ENCODE measurements at regions of chrX and their contacts with region 1.

Region 1: DNA sequence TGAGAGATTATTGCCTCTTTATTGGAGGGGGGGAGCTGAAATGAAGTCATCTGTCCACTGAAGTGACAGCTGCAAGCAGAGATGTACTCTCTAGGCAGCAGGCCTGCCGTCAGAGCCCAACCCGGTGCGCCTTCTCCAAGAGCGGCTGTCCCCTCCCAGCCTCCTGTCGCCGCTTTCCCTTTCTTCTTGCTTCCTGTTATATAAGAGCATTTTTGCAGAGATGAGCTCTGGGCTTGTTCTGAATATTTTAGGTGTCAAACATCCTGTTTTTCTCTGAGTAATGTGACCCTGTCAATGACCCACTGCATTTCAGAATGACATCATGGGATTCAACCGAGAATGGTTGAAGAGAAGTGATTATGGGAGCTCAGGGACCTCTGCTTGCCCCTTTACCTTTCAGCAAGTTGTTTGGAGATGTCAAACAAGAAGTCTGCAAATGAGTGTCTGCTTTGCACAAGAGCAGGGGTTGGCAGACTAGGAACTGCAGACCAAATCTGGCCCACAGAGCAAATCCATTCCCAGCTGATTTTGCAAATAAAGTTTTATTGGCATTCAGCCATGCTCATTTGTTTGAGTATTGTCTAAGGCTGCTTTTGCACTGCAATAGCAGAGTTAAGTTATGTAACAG is 79.9 kb downstream of the SLC9A6 start:
- DNase-seq: peak; percentile 55

Region 2: GRCh38 chrX:136162831-136163570 is 97.8 kb after region 1 on chrX:
- CTCF ChIA-PET with region 1: interaction called, 17 read pairs
- POLR2A ChIA-PET with region 1: interaction called, 7 read pairs
- DNase-seq: peak; percentile 70

Region 3: DNA sequence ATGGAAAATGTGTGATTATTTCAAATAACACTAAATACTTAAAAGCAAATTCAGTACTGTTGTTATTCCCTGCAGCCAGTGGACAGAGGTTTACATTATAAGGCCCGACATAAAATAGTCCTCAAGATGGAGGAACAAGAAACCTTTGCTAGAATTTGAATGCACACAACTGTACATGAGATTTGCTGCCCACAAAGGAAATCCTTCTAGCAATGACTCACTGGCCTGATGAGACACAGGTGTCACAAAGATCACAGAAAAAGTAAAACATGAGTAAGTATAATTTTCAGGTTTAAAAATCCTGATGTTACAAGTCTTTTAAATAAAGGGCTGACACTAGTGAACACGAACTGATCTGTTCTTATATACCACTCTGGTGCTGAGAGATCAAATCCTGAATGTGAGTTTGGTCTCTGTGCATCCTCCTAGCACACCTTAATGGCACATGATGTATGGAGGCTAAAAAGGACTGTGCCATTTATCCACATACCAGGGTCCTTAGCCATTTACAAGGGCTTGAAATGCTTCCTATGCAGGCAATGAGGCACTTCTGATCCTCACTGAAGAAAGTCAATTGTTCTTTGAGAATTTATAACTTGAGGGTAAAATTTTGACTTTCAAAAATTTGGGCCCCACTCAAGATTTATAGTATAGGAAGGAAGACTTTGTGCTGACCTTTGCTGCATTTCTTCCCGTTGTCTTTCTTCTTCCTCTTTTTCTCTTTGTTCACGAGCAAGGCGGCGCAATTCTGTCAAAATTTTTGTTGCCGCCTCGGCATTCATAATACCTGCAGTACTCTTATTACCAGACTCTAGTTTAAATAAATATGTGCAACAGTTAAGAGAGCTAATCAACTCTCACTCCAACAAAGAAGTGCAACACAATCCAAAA is 163.0 kb after region 1 on chrX:
- CTCF ChIA-PET with region 1: no interaction called
- POLR2A ChIA-PET with region 1: no interaction called
- DNase-seq: no peak